ENCODE measurements at regions of chr10 and their contacts with region 1.

Region 1: GRCh38 chr10:94439275-94439861 is 37.0 kb downstream of the TBC1D12 start:
- DNase-seq: peak; percentile 3
- ATAC-seq: no peak
- H3K4me3 ChIP-seq: no peak overlapping the region
- H3K27ac ChIP-seq: no peak overlapping the region
- H3K4me1 ChIP-seq: no peaks in the 10 kb centered on the region; the same call in 1 of the 2 replicates
- H3K27me3 ChIP-seq: no peaks in the 10 kb centered on the region
- CTCF ChIP-seq: no peak
- POLR2A ChIP-seq: no peak
- RAD21 ChIP-seq: no peak

Region 2: DNA sequence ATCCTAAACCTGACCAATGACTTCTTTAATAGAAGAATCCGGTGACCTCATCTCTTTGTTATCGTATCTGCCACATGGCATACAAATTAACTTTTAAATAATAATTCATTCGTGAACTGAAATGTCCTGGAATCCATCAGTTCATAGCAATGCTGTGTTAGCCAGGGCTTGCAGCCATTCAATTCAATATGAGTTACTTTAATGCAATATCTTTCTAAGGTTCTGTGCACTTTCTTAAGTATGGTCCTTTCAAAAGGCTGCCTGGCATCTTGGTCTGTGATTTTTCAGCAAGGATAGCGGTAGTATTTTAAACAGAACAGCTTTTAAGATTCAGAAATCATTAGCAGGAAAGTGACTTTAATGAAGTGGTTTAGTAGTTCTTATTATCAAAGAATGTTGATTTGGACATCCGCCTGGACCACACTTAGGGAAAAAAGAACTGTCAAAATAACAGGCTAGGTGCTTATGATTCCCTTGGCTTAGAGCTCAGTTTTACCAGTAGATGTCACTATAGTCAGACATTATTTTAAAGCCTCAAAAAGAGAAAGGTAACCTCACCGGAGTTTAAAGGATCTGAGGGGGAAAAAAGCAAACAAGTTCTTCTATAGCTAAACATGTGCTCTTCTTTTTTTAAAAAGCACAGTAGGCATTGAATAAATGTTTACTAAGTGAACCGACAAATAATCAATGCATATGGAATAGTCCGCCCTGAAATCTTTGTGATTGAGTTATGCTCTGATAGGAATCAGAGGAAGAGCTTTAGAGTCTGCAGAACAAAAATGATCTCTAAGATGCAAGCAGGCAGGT is 522.9 kb before region 1 on chr10:
- CTCF ChIA-PET with region 1: interaction called, 8 read pairs
- POLR2A ChIA-PET with region 1: no interaction called
- dilution Hi-C with region 1: no loop called
- in situ Hi-C with region 1: loop called (anchors 25 kb)
- intact Hi-C with region 1: loop called (anchors 1 kb)
- DNase-seq: peak; percentile 52
- ATAC-seq: peak; percentile 57
- H3K4me3 ChIP-seq: no peak overlapping the region
- H3K27ac ChIP-seq: no peak overlapping the region
- H3K4me1 ChIP-seq: no peaks in the 10 kb centered on the region; the same call in 1 of the 2 replicates
- H3K27me3 ChIP-seq: no peaks in the 10 kb centered on the region
- CTCF ChIP-seq: peak; percentile 67
- POLR2A ChIP-seq: no peak
- RAD21 ChIP-seq: peak; percentile 74

Region 3: GRCh38 chr10:93999401-93999851 is 439.9 kb before region 1 on chr10:
- CTCF ChIA-PET with region 1: no interaction called
- POLR2A ChIA-PET with region 1: no interaction called
- dilution Hi-C with region 1: no loop called
- in situ Hi-C with region 1: no loop called
- intact Hi-C with region 1: no loop called
- DNase-seq: peak; percentile 63
- ATAC-seq: peak; percentile 76
- H3K4me3 ChIP-seq: no peak overlapping the region
- H3K27ac ChIP-seq: no peak overlapping the region
- H3K4me1 ChIP-seq: no peaks in the 10 kb centered on the region; the same call in none of the 2 replicates
- H3K27me3 ChIP-seq: peaks cover 2% of the 10 kb centered on the region; the same call in 1 of the 2 replicates
- CTCF ChIP-seq: no peak; the same call in 1 of the 2 replicates
- POLR2A ChIP-seq: no peak
- RAD21 ChIP-seq: no peak; the same call in 1 of the 2 replicates

Region 4: GRCh38 chr10:94076321-94076841 is 363.0 kb before region 1 on chr10:
- CTCF ChIA-PET with region 1: interaction called, 5 read pairs
- POLR2A ChIA-PET with region 1: no interaction called
- dilution Hi-C with region 1: no loop called
- in situ Hi-C with region 1: loop called (anchors 25 kb)
- intact Hi-C with region 1: loop called (anchors 2 kb)
- DNase-seq: peak; percentile 71
- ATAC-seq: peak; percentile 85
- H3K4me3 ChIP-seq: no peak overlapping the region
- H3K27ac ChIP-seq: no peak overlapping the region
- H3K4me1 ChIP-seq: peaks cover 1% of the 10 kb centered on the region; the same call in 1 of the 2 replicates
- H3K27me3 ChIP-seq: no peaks in the 10 kb centered on the region
- CTCF ChIP-seq: peak; percentile 73
- POLR2A ChIP-seq: no peak
- RAD21 ChIP-seq: peak; percentile 84

Region 5: DNA sequence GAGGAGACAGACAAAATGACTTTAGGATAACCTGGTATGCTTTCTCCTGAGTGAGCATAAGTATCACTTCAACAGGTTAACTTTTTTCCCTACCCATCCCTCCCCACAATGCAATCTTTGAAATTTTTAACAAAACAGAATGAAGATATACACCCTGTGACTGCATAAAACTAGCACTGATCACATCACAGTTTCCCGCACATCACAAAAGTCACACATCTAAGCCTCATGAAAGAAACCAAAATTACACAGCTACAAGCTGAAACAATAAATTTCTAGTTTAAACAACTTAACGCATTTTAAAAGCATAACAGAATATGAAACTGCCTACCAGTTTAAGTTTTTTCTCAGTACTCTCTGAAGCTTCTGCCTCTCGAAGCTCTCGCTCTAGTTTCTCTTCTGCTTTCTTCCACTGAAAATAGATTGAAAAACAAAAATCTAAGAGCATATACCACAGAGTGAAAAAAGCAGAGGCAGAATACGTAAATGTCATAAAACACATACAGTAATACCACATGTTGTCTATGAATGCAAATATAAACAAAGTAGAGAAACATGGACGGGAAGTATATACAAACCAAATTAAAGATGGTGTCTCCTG is 94.7 kb before region 1 on chr10:
- CTCF ChIA-PET with region 1: interaction called, 5 read pairs
- POLR2A ChIA-PET with region 1: interaction called, 4 read pairs
- dilution Hi-C with region 1: no loop called
- in situ Hi-C with region 1: no loop called
- intact Hi-C with region 1: loop called (anchors 5 kb)
- DNase-seq: no peak
- ATAC-seq: no peak
- H3K4me3 ChIP-seq: no peak overlapping the region
- H3K27ac ChIP-seq: no peak overlapping the region
- H3K4me1 ChIP-seq: no peaks in the 10 kb centered on the region
- H3K27me3 ChIP-seq: no peaks in the 10 kb centered on the region
- CTCF ChIP-seq: no peak
- POLR2A ChIP-seq: no peak
- RAD21 ChIP-seq: no peak

Region 6: GRCh38 chr10:94402015-94402842 is 37.1 kb before region 1 on chr10 and contains the start of gene TBC1D12:
- CTCF ChIA-PET with region 1: interaction called, 5 read pairs
- POLR2A ChIA-PET with region 1: interaction called, 7 read pairs
- dilution Hi-C with region 1: no loop called
- in situ Hi-C with region 1: no loop called
- intact Hi-C with region 1: loop called (anchors 2 kb)
- DNase-seq: peak; percentile 97
- ATAC-seq: peak; percentile 90
- H3K4me3 ChIP-seq: peak within 1 kb of the TSS; percentile 83
- H3K27ac ChIP-seq: peak within 1 kb of the TSS; percentile 90
- H3K4me1 ChIP-seq: no peaks in the 10 kb centered on the region
- H3K27me3 ChIP-seq: no peaks in the 10 kb centered on the region
- CTCF ChIP-seq: no peak
- POLR2A ChIP-seq: 0 out of 2 replicates have a peak, but pooled peaks have one; percentile 56
- RAD21 ChIP-seq: no peak
- total RNA-seq, gene TBC1D12: 5.4 and 8.1 TPM in 2 replicates